Activated naive CD4-positive, alpha-beta T cell treated with anti-CD3 and anti-CD28 coated beads for 36 hours (primary cell): ENCODE measurements at regions of chr11 and their contacts with region 1.

Region 1: GRCh38 chr11:27698872-27699474 is 1.3 kb downstream of the BDNF start:
- DNase-seq: peak; percentile 81
- H3K4me3 Mint-ChIP-seq: peak overlapping the region; percentile 41
- H3K27ac Mint-ChIP-seq: no peak overlapping the region
- H3K4me1 Mint-ChIP-seq: peaks cover 27% of the 10 kb centered on the region
- H3K27me3 Mint-ChIP-seq: peaks cover 65% of the 10 kb centered on the region

Region 2: DNA sequence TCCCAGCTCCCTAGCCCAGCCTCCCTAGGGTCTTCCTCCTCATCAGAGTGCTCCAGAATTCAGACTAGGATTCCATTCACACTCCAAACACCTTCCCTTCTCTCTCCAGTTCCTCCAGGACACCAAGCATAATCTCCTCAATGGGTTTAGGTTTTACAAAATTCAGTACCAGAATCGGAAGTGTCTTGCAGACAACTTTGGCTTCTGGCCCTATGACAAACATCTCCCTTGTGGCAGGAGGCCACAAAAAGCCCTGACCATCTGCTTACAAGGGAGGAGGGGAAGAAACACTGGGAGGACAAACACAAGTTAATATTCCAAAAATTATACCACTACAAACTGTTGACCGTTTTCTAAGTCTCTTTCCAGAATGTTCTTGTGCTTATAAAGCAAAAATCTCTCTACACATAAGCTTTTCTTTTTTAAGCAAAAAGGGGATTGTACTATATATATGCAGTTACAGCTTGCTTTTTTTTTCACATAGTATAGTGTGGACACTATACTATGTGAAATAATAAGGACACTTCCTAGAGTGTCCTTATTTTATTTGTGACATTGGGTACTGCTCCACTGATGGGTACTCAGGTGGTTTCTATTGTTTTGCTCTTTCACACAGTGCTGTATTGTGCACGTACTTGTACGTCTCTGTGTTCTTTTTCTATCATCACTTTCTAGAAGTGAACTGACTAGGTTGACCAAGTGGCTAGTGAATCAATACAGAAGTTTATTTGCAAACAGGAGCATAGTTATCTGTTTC is 77.4 kb before region 1 on chr11:
- CTCF ChIA-PET with region 1: no interaction called
- intact Hi-C with region 1: no loop called
- DNase-seq: no peak
- H3K4me3 Mint-ChIP-seq: no peak overlapping the region
- H3K27ac Mint-ChIP-seq: no peak overlapping the region
- H3K4me1 Mint-ChIP-seq: no peaks in the 10 kb centered on the region
- H3K27me3 Mint-ChIP-seq: no peaks in the 10 kb centered on the region

Region 3: DNA sequence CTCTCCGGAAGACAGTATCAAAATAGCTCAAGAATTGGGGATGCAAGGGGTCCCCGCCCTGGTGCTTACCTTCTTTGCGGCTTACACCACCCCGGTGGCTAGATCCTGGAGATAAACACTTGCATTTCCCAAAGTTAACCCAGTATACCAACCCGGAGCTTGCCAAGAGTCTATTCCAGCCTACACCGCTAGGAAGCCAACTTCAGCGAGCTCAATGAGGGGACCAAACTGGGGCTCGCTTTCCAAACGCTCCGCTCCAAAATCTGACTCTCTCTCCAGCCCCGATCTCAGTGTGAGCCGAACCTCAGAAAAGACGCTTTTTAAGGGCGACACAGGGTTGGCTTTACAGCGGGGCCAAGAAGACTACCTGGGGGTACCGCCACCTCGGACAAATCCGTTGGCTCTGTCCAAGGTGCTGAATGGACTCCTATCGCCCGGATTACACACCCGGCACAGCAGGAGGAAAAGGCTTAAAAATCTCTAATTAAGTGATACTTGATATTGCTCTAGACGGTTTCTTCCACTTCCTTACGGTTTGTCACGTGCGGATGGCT is 21.4 kb after region 1 on chr11:
- CTCF ChIA-PET with region 1: interaction called, 11 read pairs
- intact Hi-C with region 1: loop called (anchors 2 kb)
- DNase-seq: peak; percentile 47
- H3K4me3 Mint-ChIP-seq: no peak overlapping the region
- H3K27ac Mint-ChIP-seq: no peak overlapping the region
- H3K4me1 Mint-ChIP-seq: peaks cover 22% of the 10 kb centered on the region
- H3K27me3 Mint-ChIP-seq: peaks cover 66% of the 10 kb centered on the region

Region 4: GRCh38 chr11:28107748-28108618 is 409.0 kb after region 1 on chr11 and contains the starts of genes KIF18A and METTL15:
- CTCF ChIA-PET with region 1: no interaction called
- intact Hi-C with region 1: loop called (anchors 2 kb)
- DNase-seq: peak; percentile 99
- H3K4me3 Mint-ChIP-seq: peak within 1 kb of the TSS; percentile 99
- H3K27ac Mint-ChIP-seq: peak within 1 kb of the TSS; percentile 98
- H3K4me1 Mint-ChIP-seq: peaks cover 33% of the 10 kb centered on the region
- H3K27me3 Mint-ChIP-seq: no peaks in the 10 kb centered on the region
- total RNA-seq, gene KIF18A: 34.7 to 36.5 TPM
- total RNA-seq, gene METTL15: 18.0 to 19.8 TPM

Region 5: GRCh38 chr11:28529540-28530410 is 830.8 kb after region 1 on chr11:
- CTCF ChIA-PET with region 1: interaction called, 10 read pairs
- intact Hi-C with region 1: loop called (anchors 1 kb)
- DNase-seq: no peak
- H3K4me3 Mint-ChIP-seq: no peak overlapping the region
- H3K27ac Mint-ChIP-seq: no peak overlapping the region
- H3K4me1 Mint-ChIP-seq: no peaks in the 10 kb centered on the region
- H3K27me3 Mint-ChIP-seq: no peaks in the 10 kb centered on the region

Region 6: DNA sequence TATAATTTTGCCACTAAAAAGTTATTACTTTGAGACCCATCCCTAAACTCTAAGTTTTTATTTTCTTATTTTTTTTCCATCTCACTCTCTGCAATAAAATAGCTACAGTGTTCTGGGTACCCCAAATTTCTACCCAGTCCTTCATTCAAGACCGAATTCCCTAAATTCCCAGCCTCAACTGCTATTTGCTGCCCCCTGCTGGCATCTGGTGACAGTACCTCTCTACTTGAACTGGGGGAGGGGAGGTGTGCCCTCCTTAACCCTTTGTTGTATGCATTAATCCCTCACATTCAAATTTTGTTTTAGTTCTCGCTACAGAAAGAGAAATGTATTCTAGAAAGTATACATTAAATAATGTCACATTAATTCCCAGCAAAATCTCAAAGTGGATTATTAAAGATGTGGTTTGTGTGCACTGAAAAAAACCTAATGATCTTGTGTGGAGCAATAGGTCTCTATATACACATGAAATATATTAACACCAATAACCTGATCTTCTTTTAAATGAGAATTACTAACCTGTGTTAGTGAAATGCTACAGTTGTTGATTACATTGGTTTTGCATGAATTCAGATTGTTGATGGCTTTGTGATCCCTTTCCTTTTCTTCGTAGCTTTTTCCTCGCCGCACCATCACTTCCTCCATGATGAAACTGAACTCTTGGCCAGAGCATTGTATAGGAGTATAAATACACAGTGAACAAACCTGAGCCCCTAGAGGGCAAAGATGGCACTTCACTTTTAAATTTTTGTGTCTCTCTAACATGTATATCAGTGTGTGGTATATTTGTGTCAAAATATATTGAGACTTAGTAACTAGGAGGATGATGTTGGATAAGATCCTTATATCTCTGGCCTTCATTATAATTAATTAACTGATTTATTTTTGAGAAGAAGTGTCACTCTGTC is 999.2 kb after region 1 on chr11:
- CTCF ChIA-PET with region 1: interaction called, 4 read pairs
- intact Hi-C with region 1: loop called (anchors 1 kb)
- DNase-seq: peak; percentile 48
- H3K4me3 Mint-ChIP-seq: no peak overlapping the region
- H3K27ac Mint-ChIP-seq: no peak overlapping the region
- H3K4me1 Mint-ChIP-seq: no peaks in the 10 kb centered on the region
- H3K27me3 Mint-ChIP-seq: no peaks in the 10 kb centered on the region

Region 7: DNA sequence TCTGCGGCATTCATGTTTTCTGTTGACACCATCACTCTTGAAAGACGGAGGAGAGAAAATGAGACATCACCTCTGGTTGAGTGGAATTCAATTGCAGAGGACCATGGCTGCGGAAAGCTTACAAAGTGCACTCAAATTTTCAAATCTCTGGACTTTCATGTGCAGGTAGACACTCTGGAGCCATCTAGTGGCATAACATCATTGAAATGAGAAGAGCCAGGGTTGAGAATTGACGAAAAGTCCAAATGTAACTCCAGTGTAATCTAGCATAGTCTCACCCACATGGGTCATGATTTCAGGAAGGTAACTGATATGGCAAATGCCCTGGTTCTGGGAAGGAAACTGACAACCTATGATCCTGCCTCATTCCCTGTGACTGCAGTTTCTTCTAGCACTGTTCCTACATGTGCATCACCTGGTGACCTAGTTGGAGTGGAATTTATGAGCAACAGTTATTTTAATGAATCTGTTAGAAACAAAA is 1630.0 kb after region 1 on chr11:
- CTCF ChIA-PET with region 1: no interaction called
- intact Hi-C with region 1: loop called (anchors 2 kb)
- DNase-seq: no peak
- H3K4me3 Mint-ChIP-seq: no peak overlapping the region
- H3K27ac Mint-ChIP-seq: no peak overlapping the region
- H3K4me1 Mint-ChIP-seq: no peaks in the 10 kb centered on the region
- H3K27me3 Mint-ChIP-seq: no peaks in the 10 kb centered on the region

Region 8: DNA sequence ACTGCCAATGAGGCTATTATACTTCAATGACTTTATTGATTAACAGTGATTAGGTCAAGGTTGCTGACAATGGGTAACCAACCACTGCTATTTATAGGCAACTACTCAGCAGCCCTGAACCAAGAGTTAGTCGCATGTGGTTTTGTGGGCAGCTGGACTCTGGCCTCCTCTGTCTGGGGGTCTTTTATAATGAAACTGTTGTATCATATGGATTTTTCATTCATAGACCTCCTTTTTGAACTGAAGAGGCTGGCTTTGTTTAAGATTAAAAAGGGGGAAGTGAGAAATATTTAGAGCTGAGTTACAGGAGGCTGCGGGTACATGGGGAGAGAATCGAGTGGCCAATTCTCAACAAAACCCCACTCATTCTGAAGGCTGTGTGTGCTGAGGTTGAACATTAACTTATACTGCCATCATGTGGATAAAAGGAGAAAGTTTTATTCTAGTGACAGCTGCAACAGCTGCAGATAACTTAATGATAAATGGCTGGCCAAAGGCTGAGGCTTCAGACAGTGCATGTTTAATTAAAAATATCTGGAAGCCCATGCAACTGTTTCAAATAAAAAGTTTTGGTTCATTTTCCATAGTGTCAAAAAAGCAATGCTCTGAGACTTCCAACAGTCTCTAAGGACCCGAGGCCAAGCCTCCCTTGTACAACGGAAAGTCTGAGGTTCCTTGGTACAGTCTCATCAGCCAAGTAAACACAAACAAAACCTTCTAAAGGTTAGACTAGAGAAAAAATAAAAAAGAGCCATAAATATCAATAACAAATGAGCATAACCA is 1635.2 kb after region 1 on chr11:
- CTCF ChIA-PET with region 1: no interaction called
- intact Hi-C with region 1: loop called (anchors 2 kb)
- DNase-seq: no peak
- H3K4me3 Mint-ChIP-seq: no peak overlapping the region
- H3K27ac Mint-ChIP-seq: no peak overlapping the region
- H3K4me1 Mint-ChIP-seq: no peaks in the 10 kb centered on the region
- H3K27me3 Mint-ChIP-seq: no peaks in the 10 kb centered on the region